Prostate gland (tissue), 2 donors: ENCODE measurements at regions of chr2 and their contacts with region 1.

Region 1: DNA sequence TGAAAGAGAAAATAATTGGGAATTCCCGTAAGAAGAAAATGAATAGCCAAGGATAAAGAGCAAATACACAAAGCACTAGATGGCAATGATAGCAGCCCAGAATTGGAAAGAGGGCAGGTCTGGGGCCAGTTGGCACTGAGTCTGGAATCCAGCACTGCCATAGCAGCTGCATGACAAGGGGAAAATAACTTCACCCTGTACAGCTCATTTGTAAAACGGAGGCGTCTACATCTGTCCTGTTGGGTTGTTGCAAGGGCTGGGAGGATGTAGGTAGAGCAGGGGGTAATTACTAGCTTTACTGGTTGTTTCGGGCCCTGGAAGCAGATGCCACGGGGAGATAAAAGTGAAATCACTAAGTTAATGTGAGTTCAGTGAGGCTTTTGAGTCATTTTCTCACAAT is 110.0 kb upstream of the RASGRP3 start:
- DNase-seq: peak; percentile 33
- H3K4me3 ChIP-seq: no peak overlapping the region
- H3K27ac ChIP-seq: no peak overlapping the region
- H3K4me1 ChIP-seq: no peaks in the 10 kb centered on the region
- H3K27me3 ChIP-seq: no peaks in the 10 kb centered on the region
- CTCF ChIP-seq: no peak
- POLR2A ChIP-seq: no peak

Region 2: GRCh38 chr2:32688511-32688910 is 678.0 kb before region 1 on chr2:
- intact Hi-C with region 1: no loop called
- DNase-seq: no peak
- H3K4me3 ChIP-seq: no peak overlapping the region
- H3K27ac ChIP-seq: no peak overlapping the region
- H3K4me1 ChIP-seq: no peaks in the 10 kb centered on the region
- H3K27me3 ChIP-seq: no peaks in the 10 kb centered on the region
- CTCF ChIP-seq: no peak
- POLR2A ChIP-seq: no peak

Region 3: GRCh38 chr2:33264766-33265165 is 101.7 kb before region 1 on chr2:
- intact Hi-C with region 1: no loop called
- DNase-seq: no peak
- H3K4me3 ChIP-seq: no peak overlapping the region
- H3K27ac ChIP-seq: no peak overlapping the region
- H3K4me1 ChIP-seq: no peaks in the 10 kb centered on the region
- H3K27me3 ChIP-seq: no peaks in the 10 kb centered on the region
- CTCF ChIP-seq: no peak
- POLR2A ChIP-seq: no peak

Region 4: GRCh38 chr2:33275689-33276444 is 90.6 kb before region 1 on chr2:
- intact Hi-C with region 1: loop called (anchors 10 kb)
- DNase-seq: no peak
- H3K4me3 ChIP-seq: no peak overlapping the region
- H3K27ac ChIP-seq: no peak overlapping the region
- H3K4me1 ChIP-seq: no peaks in the 10 kb centered on the region
- H3K27me3 ChIP-seq: no peaks in the 10 kb centered on the region
- CTCF ChIP-seq: no peak
- POLR2A ChIP-seq: no peak